Astrocyte of the cerebellum (primary cell): ENCODE measurements at regions of chr2 and their contacts with region 1.

Region 1: DNA sequence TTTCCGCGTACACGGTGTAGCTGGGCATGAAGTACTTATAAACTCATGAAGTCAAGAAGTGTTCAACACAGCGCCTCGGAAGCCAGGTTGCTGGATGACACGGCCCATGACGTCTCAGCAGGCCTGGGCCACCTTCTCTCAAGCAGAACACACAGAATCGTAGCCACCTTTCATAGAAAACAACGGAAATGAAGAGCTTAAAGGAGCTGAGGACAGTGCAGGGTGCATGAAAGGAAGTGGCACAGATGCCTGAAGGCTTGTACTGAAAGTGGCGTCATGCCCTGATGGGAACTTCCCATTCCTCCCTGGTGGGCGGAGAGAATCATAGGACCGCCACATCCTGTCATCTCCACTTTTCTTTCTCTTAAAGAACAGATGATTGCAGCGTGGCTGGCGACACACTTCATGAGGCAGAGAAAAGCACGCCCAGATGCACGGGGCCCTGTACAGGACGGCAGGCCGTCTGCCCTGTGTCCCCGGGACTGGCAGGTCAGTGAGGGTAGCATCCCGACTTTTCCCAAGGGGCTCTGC is 31.1 kb downstream of the HDAC4 start:
- DNase-seq: no peak
- H3K4me3 ChIP-seq: no peak overlapping the region
- CTCF ChIP-seq: no peak

Region 2: GRCh38 chr2:239143858-239144718 is 225.6 kb before region 1 on chr2:
- in situ Hi-C with region 1: loop called (anchors 25 kb)
- DNase-seq: peak; percentile 19
- H3K4me3 ChIP-seq: no peak overlapping the region
- CTCF ChIP-seq: peak; percentile 79

Region 3: GRCh38 chr2:239429473-239430350 is 60.0 kb after region 1 on chr2:
- in situ Hi-C with region 1: no loop called
- DNase-seq: no peak
- H3K4me3 ChIP-seq: no peak overlapping the region
- CTCF ChIP-seq: no peak